Tibial artery (tissue), 4 donors: ENCODE measurements at regions of chr13 and their contacts with region 1.

Region 1: GRCh38 chr13:21476893-21477472 is 17.9 kb upstream of the ZDHHC20 start:
- DNase-seq: peak; percentile 74 to 82
- H3K4me3 ChIP-seq: peak overlapping the region; percentile 40 to 46
- H3K27ac ChIP-seq: no peak overlapping the region
- H3K4me1 ChIP-seq: peaks cover 0 to 15% (median 7%) of the 10 kb centered on the region in 4 donors
- H3K27me3 ChIP-seq: no peaks in the 10 kb centered on the region
- CTCF ChIP-seq: peak; percentile 79 to 88

Region 2: DNA sequence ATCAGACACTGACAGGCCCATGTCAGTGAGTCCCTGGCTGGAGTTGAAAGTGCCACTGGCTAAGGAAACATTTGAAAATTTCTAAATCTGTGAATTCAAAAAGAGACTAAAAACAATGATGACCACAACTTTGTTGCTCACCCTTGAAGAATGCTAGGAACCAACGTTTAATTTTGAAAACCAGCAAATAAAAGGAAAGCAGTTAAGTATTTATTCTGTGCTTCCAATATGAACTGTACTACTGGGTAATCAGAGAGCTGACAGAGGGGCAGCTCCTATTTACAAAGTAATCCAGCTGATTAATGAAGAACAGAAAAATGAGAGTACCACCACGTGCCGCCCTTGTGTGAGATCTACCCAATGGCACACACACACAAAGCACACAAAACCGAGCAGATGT is 370.9 kb before region 1 on chr13:
- intact Hi-C with region 1: loop called (anchors 5 kb)
- DNase-seq: no peak
- H3K4me3 ChIP-seq: no peak overlapping the region
- H3K27ac ChIP-seq: no peak overlapping the region
- H3K4me1 ChIP-seq: no peaks in the 10 kb centered on the region
- H3K27me3 ChIP-seq: no peaks in the 10 kb centered on the region
- CTCF ChIP-seq: no peak

Region 3: GRCh38 chr13:21297914-21298831 is 178.8 kb before region 1 on chr13:
- intact Hi-C with region 1: loop called (anchors 5 kb)
- DNase-seq: peak; percentile 80 to 85
- H3K4me3 ChIP-seq: peak overlapping the region; percentile 76 to 89
- H3K27ac ChIP-seq: peak overlapping the region; percentile 78 to 79
- H3K4me1 ChIP-seq: peaks cover 0 to 21% (median 6%) of the 10 kb centered on the region in 4 donors
- H3K27me3 ChIP-seq: no peaks in the 10 kb centered on the region
- CTCF ChIP-seq: peak; percentile 80 to 88

Region 4: DNA sequence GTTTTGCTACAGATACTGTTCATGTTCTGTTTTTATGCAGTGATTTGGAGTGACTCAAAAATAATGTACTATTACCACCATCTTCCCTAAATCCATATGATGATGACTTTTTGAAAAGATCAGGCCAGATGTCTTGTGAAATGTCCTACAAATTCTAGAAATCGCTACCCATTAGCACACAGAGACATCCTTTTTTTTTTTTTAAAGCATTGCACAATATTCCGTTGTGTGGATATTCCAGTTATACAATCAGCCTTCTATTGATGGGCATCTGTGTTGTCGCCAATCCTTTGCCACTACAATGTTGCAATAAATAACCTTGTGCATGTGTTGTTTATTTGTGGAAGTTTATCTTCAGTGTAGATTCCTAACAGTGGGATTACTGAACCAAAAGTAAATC is 42.4 kb before region 1 on chr13:
- intact Hi-C with region 1: no loop called
- DNase-seq: no peak
- H3K4me3 ChIP-seq: no peak overlapping the region
- H3K27ac ChIP-seq: no peak overlapping the region
- H3K4me1 ChIP-seq: peaks cover 0 to 8% (median 5%) of the 10 kb centered on the region in 4 donors
- H3K27me3 ChIP-seq: no peaks in the 10 kb centered on the region
- CTCF ChIP-seq: no peak

Region 5: DNA sequence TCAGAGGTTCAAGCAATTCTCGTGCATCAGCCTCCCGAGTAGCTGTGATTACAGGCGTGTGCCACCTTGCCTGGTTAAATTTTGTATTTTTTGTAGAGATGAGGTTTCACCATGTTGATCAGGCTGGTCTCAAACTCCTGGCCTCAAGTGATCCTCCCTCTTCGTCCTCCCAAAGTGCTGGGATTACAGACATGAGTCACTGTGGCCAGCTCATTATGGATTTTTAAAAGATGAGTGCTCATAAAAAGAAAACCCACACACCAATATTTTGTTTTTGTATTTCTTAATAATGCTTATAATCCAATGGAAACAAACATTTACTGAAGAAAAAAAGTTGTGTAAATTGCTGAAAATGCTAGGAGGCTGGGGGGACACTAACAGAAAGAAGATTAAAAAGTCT is 132.0 kb after region 1 on chr13:
- intact Hi-C with region 1: no loop called
- DNase-seq: no peak
- H3K4me3 ChIP-seq: no peak overlapping the region
- H3K27ac ChIP-seq: no peak overlapping the region
- H3K4me1 ChIP-seq: no peaks in the 10 kb centered on the region
- H3K27me3 ChIP-seq: peaks cover 0 to 6% of the 10 kb centered on the region in 2 donors
- CTCF ChIP-seq: no peak